ENCODE measurements at regions of chr4 and their contacts with region 1.

Region 1: GRCh38 chr4:175536852-175537453 is 275.1 kb downstream of the GPM6A start:
- DNase-seq: no peak
- ATAC-seq: no peak
- H3K4me3 ChIP-seq: no peak overlapping the region
- H3K27ac ChIP-seq: no peak overlapping the region
- H3K4me1 ChIP-seq: no peaks in the 10 kb centered on the region
- H3K27me3 ChIP-seq: no peaks in the 10 kb centered on the region
- CTCF ChIP-seq: peak in 8 of 9 donors; percentile 25 to 63 (median 52)

Region 2: DNA sequence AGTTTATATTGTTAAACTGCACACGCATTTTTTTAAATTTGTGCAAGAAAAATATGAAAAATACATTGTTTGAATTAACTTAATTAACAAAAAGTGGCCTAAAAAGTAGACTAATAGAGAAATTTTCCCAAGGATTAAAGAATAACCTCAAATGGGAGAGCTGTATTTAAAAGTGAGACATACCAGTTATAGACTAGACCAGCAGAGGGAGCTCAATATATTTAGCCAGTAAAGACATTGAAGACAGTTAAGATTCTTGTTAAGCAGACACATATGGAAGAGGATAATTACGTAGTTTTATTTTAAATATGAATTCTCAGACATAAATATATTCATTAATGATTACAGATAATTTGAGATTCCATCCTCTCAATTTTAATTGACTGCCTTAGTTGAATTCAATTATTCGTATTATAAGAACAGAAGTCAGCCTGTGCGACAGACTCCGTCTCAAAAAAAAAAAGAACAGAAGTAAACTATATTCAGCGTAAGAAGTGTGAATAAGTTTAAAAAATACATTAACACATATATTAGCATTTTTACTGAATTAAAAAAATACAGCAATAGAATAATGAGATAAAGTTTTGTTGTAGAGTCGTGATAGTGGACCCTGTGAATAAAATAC is 772.7 kb before region 1 on chr4:
- intact Hi-C with region 1: loop called (anchors 2 to 10 kb)
- DNase-seq: no peak
- ATAC-seq: peak in 1 of 8 donors; percentile 61
- H3K4me3 ChIP-seq: no peak overlapping the region
- H3K27ac ChIP-seq: no peak overlapping the region
- H3K4me1 ChIP-seq: no peaks in the 10 kb centered on the region
- H3K27me3 ChIP-seq: no peaks in the 10 kb centered on the region
- CTCF ChIP-seq: peak in 8 of 9 donors; percentile 32 to 67 (median 56)

Region 3: DNA sequence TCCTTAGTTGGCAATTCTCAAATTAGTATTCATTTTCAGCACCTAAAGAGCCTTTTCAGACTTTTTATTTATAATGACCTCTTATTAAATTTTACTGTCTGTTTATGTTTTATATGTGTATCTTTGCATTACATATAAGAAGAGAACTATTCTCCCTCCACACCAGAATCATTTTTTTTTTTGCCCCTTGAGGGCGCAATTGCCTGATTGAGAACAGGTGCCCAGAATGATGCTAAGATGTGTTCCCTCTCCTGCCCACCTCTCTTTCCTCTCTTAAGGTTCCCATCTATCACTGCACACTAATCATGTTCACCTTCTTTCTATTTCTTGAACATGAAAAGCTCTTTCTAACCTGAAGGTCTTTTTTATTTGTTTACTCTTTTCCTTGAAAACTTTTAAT is 663.0 kb before region 1 on chr4:
- intact Hi-C with region 1: loop called in 2 of 10 experiments (anchors 5 to 10 kb)
- DNase-seq: no peak
- ATAC-seq: no peak
- H3K4me3 ChIP-seq: no peak overlapping the region
- H3K27ac ChIP-seq: no peak overlapping the region
- H3K4me1 ChIP-seq: no peaks in the 10 kb centered on the region
- H3K27me3 ChIP-seq: no peaks in the 10 kb centered on the region
- CTCF ChIP-seq: peak in 2 of 9 donors; percentile 22 to 25

Region 4: DNA sequence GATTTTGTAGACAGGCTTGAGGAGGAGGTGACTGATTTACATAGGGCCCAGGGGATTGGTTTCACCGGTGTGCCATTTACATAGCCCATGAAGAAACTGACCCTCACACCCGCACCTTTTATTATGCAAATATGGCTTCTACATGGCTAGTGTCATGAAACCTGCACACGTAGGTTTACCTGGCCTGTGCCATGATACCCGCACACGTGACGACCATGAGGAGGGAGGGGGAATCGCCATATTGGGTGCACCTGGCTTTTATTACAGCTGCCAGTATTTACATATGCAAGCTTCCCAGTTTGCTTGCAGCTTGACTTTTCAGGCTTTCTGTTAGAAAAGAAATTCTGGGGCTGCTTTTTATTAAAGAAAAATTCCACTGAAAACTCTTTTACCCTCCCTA is 259.1 kb before region 1 on chr4:
- intact Hi-C with region 1: no loop called
- DNase-seq: no peak
- ATAC-seq: no peak
- H3K4me3 ChIP-seq: no peak overlapping the region
- H3K27ac ChIP-seq: no peak overlapping the region
- H3K4me1 ChIP-seq: peaks cover 0 to 11% (median 0%) of the 10 kb centered on the region in 9 donors
- H3K27me3 ChIP-seq: no peaks in the 10 kb centered on the region
- CTCF ChIP-seq: no peak

Region 5: GRCh38 chr4:175480404-175480803 is 56.5 kb before region 1 on chr4:
- intact Hi-C with region 1: no loop called
- DNase-seq: no peak
- ATAC-seq: no peak
- H3K4me3 ChIP-seq: no peak overlapping the region
- H3K27ac ChIP-seq: no peak overlapping the region
- H3K4me1 ChIP-seq: no peaks in the 10 kb centered on the region
- H3K27me3 ChIP-seq: no peaks in the 10 kb centered on the region
- CTCF ChIP-seq: no peak

Measured in heart right ventricle (tissue), 16 donors.